AG04449 (cell line): ENCODE measurements at regions of chr16 and their contacts with region 1.

Region 1: GRCh38 chr16:52929478-52930400 is 123.0 kb downstream of the CHD9NB start:
- DNase-seq: no peak
- H3K4me3 ChIP-seq: no peak overlapping the region
- CTCF ChIP-seq: no peak

Region 2: GRCh38 chr16:52757746-52758472 is 171.8 kb before region 1 on chr16:
- CTCF ChIA-PET with region 1: no interaction called
- POLR2A ChIA-PET with region 1: no interaction called
- DNase-seq: no peak
- H3K4me3 ChIP-seq: no peak overlapping the region
- CTCF ChIP-seq: no peak

Region 3: GRCh38 chr16:52912565-52913173 is 17.1 kb before region 1 on chr16:
- CTCF ChIA-PET with region 1: interaction called, 12 read pairs
- POLR2A ChIA-PET with region 1: no interaction called
- DNase-seq: peak; percentile 1
- H3K4me3 ChIP-seq: no peak overlapping the region
- CTCF ChIP-seq: peak; percentile 66